Transverse colon (tissue), 4 donors: ENCODE measurements at regions of chr3 and their contacts with region 1.

Region 1: DNA sequence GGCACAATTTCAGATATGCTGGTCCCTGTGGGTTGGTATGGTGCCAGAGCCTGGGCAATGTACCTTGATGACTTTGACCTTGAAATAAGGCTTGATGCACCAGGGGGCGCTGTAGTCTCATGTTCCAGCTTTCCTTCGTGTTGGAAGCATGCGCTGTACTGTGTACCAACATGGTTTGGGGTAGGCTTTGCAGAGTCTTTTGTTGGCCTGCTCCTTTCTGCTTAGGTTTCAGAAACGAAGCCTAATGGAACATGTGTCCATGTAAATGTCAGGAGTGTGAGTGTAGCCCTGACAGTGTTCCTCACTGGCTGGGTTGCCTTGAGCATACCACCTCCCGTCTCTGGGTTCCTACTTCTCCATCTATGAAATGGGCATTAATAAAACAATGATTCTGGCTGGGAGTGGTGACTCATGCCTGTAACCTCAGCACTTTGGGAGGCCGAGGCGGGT is 3.6 kb upstream of the CCR4 start:
- DNase-seq: peak; percentile 89
- H3K4me3 ChIP-seq: no peak overlapping the region
- H3K27ac ChIP-seq: no peak overlapping the region
- H3K4me1 ChIP-seq: no peaks in the 10 kb centered on the region
- H3K27me3 ChIP-seq: no peaks in the 10 kb centered on the region
- CTCF ChIP-seq: peak; percentile 58 to 80 (median 70)
- EP300 ChIP-seq: no peak
- POLR2A ChIP-seq: no peak

Region 2: DNA sequence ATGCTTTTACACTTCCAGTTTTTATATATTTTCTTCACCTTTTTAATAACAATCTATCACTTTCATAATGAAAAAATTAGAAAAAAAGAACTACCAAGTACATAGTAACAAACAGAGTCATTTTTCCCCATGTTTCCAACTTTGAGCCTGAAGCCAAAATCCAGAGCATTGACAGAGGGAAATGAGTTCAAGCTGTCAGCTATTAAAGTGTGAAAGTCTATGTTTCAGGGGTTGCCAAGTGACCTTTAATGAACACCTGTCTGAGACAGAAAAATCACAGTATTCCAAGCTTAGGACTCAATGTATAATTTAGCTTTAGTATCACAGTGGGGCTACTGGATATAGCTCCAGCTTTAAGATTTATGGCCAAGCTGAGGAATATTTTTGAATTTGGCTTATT is 1925.1 kb before region 1 on chr3:
- in situ Hi-C with region 1: no loop called
- intact Hi-C with region 1: loop called (anchors 5 kb)
- DNase-seq: no peak
- H3K4me3 ChIP-seq: no peak overlapping the region
- H3K27ac ChIP-seq: no peak overlapping the region
- H3K4me1 ChIP-seq: no peaks in the 10 kb centered on the region
- H3K27me3 ChIP-seq: no peaks in the 10 kb centered on the region
- CTCF ChIP-seq: no peak
- EP300 ChIP-seq: no peak
- POLR2A ChIP-seq: no peak

Region 3: DNA sequence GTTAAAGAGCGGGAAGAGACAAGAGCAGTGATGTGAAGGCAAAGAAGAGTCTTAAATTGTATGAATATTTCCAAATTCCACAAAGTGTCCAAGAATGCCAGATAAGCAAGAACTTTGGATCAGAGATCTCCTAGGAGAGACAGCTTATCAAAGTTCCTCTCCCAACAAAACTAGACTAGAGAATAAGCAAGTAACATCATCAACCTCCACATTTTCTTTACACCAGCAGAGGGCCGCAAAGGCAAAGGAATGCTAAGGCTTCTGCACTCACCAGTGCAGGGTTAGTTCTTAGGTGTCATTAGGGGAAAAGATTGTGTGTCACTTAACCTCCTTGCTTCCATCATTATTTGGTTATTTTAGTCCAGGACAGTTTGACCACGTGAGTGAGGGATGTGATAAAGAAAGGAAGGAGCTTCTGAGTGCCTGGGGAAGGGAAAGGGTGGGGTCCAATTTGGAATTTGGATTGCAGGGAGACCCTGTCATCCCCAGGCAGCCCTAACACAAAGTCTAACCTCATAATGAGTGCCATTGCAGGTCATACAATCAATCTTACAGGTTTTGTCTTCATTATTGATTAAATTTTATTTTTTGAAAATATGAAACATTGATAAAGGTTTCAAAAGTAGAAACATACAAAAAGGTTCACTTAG is 437.6 kb before region 1 on chr3:
- in situ Hi-C with region 1: loop called in 1 of 4 experiments (anchors 25 kb)
- intact Hi-C with region 1: no loop called
- DNase-seq: peak; percentile 67
- H3K4me3 ChIP-seq: no peak overlapping the region
- H3K27ac ChIP-seq: no peak overlapping the region
- H3K4me1 ChIP-seq: peaks cover 0 to 4% (median 1%) of the 10 kb centered on the region in 4 donors
- H3K27me3 ChIP-seq: no peaks in the 10 kb centered on the region
- CTCF ChIP-seq: peak; percentile 59 to 84 (median 63)
- EP300 ChIP-seq: no peak
- POLR2A ChIP-seq: no peak

Region 4: DNA sequence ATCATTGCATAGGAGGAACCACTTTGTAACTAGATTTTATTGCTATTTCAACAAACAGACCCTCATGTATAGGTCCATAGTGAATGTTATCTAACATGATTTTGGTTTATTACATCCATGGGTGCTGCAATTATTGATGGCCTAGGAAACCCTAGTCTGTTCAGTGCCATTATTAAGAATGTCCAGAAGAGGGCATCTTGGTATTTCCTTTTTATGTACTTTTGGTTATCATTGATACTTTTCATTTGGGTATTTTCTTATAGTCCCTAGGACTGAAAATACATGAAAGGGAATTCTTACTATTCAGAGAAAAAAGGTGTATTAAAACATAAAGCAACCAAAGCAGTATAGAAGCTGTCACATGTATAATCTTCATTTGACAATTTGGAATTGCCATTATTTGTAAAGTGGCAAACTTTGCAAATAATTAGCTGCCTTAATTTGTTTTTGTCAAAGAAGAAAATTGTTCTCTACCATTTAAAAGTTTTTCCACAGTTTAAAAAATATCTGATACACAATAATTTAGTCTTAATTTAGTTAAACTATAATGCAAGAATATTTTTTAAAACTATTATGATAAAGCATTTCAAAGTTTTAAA is 214.1 kb before region 1 on chr3:
- in situ Hi-C with region 1: loop called in 1 of 4 experiments (anchors 25 kb)
- intact Hi-C with region 1: no loop called
- DNase-seq: no peak
- H3K4me3 ChIP-seq: no peak overlapping the region
- H3K27ac ChIP-seq: no peak overlapping the region
- H3K4me1 ChIP-seq: no peaks in the 10 kb centered on the region
- H3K27me3 ChIP-seq: no peaks in the 10 kb centered on the region
- CTCF ChIP-seq: peak in 4 of 5 experiments; percentile 34 to 49 (median 42)
- EP300 ChIP-seq: no peak
- POLR2A ChIP-seq: no peak

Region 5: GRCh38 chr3:33074217-33075067 is 126.6 kb after region 1 on chr3:
- in situ Hi-C with region 1: loop called in 2 of 4 experiments (anchors 5 kb)
- intact Hi-C with region 1: no loop called
- DNase-seq: peak; percentile 48
- H3K4me3 ChIP-seq: no peak overlapping the region
- H3K27ac ChIP-seq: no peak overlapping the region
- H3K4me1 ChIP-seq: peaks cover 0 to 6% (median 0%) of the 10 kb centered on the region in 4 donors
- H3K27me3 ChIP-seq: no peaks in the 10 kb centered on the region
- CTCF ChIP-seq: peak; percentile 74 to 89 (median 83)
- EP300 ChIP-seq: no peak
- POLR2A ChIP-seq: no peak

Region 6: GRCh38 chr3:33360136-33360825 is 412.5 kb after region 1 on chr3:
- in situ Hi-C with region 1: loop called in 2 of 4 experiments (anchors 10 to 25 kb)
- intact Hi-C with region 1: no loop called
- DNase-seq: no peak
- H3K4me3 ChIP-seq: no peak overlapping the region
- H3K27ac ChIP-seq: no peak overlapping the region
- H3K4me1 ChIP-seq: peaks cover 0 to 17% (median 10%) of the 10 kb centered on the region in 4 donors
- H3K27me3 ChIP-seq: no peaks in the 10 kb centered on the region
- CTCF ChIP-seq: no peak
- EP300 ChIP-seq: no peak
- POLR2A ChIP-seq: no peak

Region 7: DNA sequence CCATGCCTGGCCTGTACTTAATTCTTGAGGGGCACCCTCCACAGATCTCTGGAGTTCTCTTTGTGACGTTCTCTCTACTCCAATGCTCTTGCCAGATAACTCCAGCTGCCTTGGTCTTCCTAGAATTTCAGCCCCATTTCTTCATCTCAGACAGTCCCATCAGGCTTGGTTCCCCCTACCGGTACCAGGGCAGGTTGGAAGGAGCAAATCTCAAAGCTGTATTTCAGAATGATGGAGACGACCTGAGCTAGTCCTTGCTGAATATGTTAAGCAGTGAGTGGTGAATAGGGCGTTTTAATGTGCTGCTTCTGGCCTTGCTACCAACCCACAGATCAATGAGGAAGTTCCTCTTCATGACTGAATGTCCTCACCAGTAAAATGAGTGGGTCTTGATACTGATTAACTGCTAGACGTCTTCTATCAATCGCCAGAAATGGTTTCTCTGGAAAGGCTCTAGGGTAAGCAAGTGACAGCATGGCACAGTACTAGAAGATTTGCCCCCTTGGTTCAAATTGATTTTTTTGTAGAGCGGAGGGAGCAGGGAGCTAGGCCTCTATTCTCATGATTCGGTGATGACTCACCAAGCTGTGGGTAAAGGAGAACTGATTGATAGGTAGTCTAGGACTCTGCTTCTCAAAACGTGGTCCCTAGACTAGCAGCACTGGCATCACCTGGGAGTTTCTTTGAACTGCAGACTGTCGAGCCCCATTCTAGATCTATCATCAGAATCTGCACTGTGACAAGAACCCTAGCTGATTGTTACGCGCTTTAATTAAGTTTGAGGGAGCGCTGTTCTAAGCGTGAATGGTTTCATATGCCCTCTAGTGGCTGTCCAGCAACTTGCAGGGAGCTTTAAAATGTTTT is 424.6 kb after region 1 on chr3:
- in situ Hi-C with region 1: loop called in 2 of 4 experiments (anchors 10 to 25 kb)
- intact Hi-C with region 1: no loop called
- DNase-seq: peak; percentile 30
- H3K4me3 ChIP-seq: no peak overlapping the region
- H3K27ac ChIP-seq: no peak overlapping the region
- H3K4me1 ChIP-seq: peaks cover 0 to 6% (median 2%) of the 10 kb centered on the region in 4 donors
- H3K27me3 ChIP-seq: no peaks in the 10 kb centered on the region
- CTCF ChIP-seq: peak; percentile 80 to 92 (median 86)
- EP300 ChIP-seq: no peak
- POLR2A ChIP-seq: no peak